ENCODE measurements at regions of chr6 and their contacts with region 1.

Region 1: DNA sequence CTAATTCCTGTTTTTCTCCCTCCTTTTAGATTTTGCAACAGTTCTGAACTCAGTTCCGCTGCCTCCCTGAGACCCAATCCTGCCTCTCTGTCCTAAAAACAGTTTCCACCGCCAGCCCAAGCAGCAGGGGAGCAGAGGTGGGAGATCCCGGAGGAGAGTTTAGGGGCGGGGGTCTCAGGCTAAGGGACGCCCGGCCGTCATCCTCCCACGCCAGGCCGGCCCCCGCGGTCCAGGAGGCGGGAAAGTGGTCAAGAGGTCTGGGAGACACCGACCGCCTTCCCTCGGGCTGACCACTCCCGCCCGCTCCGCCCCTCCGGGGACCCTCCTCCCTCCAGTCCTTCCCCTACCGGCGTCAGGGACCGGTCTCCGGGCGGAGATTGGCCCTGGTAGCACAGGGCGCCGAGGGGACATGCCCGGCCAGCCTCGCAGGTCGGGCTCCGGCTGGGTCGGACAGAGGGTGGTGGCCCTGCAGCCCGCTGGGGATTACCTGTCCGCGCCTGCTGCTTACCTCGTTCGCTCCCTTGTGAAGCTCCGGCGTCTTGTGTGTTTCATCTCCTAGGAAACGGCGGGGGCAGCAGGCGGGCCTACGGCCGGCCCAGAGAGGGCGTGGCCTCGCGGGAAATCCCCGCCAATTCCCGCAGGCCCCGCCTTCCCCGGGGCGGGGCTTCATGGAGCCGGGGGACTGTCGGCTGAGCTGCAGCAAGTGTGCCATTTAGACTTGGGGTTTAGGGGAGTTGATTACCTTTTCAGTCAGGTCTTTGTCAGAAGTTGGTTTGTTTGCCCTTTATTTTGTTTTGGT is at the start of gene MAK:
- DNase-seq: peak; percentile 98
- H3K4me3 Mint-ChIP-seq: peak within 1 kb of the TSS; percentile 89
- H3K27ac Mint-ChIP-seq: peak within 1 kb of the TSS; percentile 100
- H3K4me1 Mint-ChIP-seq: peaks cover 18% of the 10 kb centered on the region
- H3K27me3 Mint-ChIP-seq: peaks cover 42% of the 10 kb centered on the region
- total RNA-seq, gene MAK: 0.47 and 0.58 TPM in 2 replicates

Region 2: GRCh38 chr6:10404107-10404798 is 433.9 kb before region 1 on chr6:
- intact Hi-C with region 1: loop called (anchors 2 kb)
- DNase-seq: peak; percentile 97
- H3K4me3 Mint-ChIP-seq: peak overlapping the region; percentile 83
- H3K27ac Mint-ChIP-seq: peak overlapping the region; percentile 82
- H3K4me1 Mint-ChIP-seq: peaks cover 4% of the 10 kb centered on the region
- H3K27me3 Mint-ChIP-seq: peaks cover 74% of the 10 kb centered on the region

Region 3: DNA sequence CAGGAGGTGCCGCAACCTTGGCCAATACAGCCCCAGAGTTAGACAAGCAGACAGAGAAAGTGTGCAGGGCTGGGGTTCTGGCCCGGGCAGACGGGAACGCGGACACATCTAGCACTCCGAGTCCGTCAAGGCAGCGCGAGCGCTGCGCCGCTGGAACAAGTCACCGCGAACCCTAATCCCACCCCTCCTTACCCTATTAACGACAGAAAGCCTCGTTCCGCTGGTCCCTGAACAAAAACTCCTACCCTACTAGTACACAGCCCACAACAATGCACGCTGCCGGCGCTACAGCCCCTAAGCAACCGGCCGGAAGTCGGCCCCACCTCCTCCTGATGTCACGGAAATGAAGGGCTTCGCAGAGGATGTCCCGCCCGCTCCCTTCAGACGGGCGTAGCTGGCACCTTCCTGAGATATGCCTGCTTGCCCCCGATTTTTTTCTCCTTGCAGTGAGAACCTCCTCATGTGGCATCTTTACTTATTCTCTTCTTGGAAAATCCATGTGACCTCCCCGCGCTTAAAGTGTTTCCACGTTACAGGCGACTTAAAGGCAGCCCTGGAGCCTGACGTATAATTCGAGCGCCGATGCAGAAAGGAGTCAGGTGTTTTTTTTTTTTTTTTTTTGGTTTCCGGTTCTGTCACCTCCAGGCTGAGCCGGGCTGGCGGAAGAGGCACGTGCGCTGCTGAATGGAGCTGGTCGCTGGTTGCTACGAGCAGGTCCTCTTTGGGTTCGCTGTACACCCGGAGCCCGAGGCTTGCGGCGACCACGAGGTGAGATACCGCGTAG is 143.7 kb before region 1 on chr6 and contains the starts of genes C6orf52 and PAK1IP1:
- intact Hi-C with region 1: loop called (anchors 1 kb)
- DNase-seq: peak; percentile 98
- H3K4me3 Mint-ChIP-seq: peak within 1 kb of the TSS; percentile 87
- H3K27ac Mint-ChIP-seq: peak within 1 kb of the TSS; percentile 99
- H3K4me1 Mint-ChIP-seq: peaks cover 32% of the 10 kb centered on the region
- H3K27me3 Mint-ChIP-seq: no peaks in the 10 kb centered on the region
- total RNA-seq, gene C6orf52: 2.2 and 3.0 TPM in 2 replicates
- total RNA-seq, gene PAK1IP1: 39.1 TPM in 2 replicates

Region 4: GRCh38 chr6:10747251-10747972 is 90.8 kb before region 1 on chr6 and contains the start of gene TMEM14B:
- intact Hi-C with region 1: loop called (anchors 2 kb)
- DNase-seq: peak; percentile 100
- H3K4me3 Mint-ChIP-seq: peak within 1 kb of the TSS; percentile 90
- H3K27ac Mint-ChIP-seq: peak within 1 kb of the TSS; percentile 88
- H3K4me1 Mint-ChIP-seq: peaks cover 43% of the 10 kb centered on the region
- H3K27me3 Mint-ChIP-seq: no peaks in the 10 kb centered on the region
- total RNA-seq, gene TMEM14B: 94.0 and 98.0 TPM in 2 replicates

Region 5: DNA sequence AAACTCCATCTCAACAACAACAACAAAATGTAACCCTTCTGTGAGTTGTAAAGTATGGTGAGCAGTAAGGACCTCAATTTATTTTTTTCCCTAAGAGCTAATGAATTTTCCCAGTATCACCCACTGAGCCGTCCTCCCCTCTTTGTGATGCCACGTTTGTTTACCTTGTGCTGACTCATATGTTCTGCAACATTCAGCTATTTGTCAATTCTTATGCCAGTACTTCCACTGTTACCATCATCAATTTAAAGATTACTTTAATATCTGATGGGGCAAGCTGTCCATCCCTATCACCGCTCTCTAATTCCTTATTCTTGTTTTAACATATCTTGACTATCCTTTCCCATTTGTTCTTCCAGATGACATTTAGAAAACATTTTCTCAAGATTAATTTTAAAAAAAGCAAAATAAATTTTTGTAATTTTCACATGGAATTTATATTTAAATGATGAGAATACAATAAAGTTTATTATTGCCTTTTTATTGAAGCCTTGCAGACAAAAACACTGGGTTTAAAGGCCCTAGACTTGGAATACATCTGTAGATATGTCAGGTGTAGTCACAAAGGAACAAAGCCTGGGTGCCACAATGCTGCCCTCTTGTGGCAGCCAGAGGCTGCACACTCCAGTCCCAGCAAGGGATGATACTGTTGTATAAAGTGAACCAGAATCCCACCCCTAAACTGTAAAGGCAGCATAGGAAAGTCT is 37.2 kb before region 1 on chr6:
- intact Hi-C with region 1: no loop called
- DNase-seq: peak; percentile 90
- H3K4me3 Mint-ChIP-seq: no peak overlapping the region
- H3K27ac Mint-ChIP-seq: no peak overlapping the region
- H3K4me1 Mint-ChIP-seq: no peaks in the 10 kb centered on the region
- H3K27me3 Mint-ChIP-seq: no peaks in the 10 kb centered on the region

Region 6: GRCh38 chr6:11414176-11414963 is 576.2 kb after region 1 on chr6:
- intact Hi-C with region 1: loop called (anchors 5 kb)
- DNase-seq: peak; percentile 78
- H3K4me3 Mint-ChIP-seq: no peak overlapping the region
- H3K27ac Mint-ChIP-seq: peak overlapping the region; percentile 41
- H3K4me1 Mint-ChIP-seq: peaks cover 44% of the 10 kb centered on the region
- H3K27me3 Mint-ChIP-seq: no peaks in the 10 kb centered on the region

Measured in activated CD4-positive, alpha-beta T cell treated with anti-CD3 and anti-CD28 coated beads, Interleukin-2, amount 10 ng/mL, durations not matched to agents 24 days and 14 days (primary cell).